Activated naive CD4-positive, alpha-beta T cell treated with anti-CD3 and anti-CD28 coated beads, Interleukin-2, amount 10 ng/mL, durations not matched to agents 7 days and 5 days (primary cell): ENCODE measurements at regions of chr16 and their contacts with region 1.

Region 1: DNA sequence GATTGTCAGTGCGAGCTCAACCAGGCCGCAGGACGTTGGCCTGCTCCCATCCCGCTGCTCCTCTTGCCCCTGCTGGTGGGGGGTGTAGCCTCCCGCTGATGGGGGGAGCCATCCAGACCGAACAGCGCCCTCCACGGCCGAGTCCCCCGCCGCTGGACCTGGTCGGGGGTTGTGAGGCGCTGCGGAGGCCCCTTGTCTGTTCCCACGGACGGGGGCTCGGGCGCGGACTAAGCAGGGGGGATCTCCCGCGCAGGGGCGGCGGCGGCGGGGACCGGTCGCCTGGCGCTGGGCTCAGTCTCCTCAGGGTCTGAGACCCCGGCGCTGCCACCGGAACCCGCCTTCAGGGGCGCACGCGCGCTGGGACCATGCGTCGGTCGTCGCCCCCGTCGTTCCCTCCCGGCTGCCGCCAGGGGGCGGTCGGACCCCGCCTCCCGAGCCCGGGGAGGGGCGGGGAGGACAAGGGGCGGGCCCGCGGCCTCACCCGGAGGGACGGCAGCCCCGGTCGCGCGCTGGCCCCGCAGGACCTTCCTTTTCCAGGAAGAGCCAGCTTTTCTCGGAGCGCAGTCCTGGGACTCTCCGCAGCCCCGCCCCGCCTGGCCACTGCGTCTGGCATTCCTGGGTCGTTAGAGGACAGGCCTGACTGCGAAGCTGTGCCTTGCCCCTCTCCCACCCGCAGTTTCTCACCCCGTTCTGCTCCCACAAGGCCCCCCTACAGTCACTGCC is 6.3 kb upstream of the IL32 start:
- DNase-seq: peak; percentile 89
- H3K4me3 Mint-ChIP-seq: peak overlapping the region; percentile 96
- H3K27ac Mint-ChIP-seq: peak overlapping the region; percentile 92
- H3K4me1 Mint-ChIP-seq: peaks cover 79% of the 10 kb centered on the region
- H3K27me3 Mint-ChIP-seq: no peaks in the 10 kb centered on the region

Region 2: GRCh38 chr16:3045357-3045728 is 13.8 kb before region 1 on chr16:
- CTCF ChIA-PET with region 1: interaction called, 11 read pairs
- DNase-seq: peak; percentile 72
- H3K4me3 Mint-ChIP-seq: peak overlapping the region; percentile 83
- H3K27ac Mint-ChIP-seq: peak overlapping the region; percentile 82
- H3K4me1 Mint-ChIP-seq: peaks cover 51% of the 10 kb centered on the region
- H3K27me3 Mint-ChIP-seq: peaks cover 85% of the 10 kb centered on the region

Region 3: DNA sequence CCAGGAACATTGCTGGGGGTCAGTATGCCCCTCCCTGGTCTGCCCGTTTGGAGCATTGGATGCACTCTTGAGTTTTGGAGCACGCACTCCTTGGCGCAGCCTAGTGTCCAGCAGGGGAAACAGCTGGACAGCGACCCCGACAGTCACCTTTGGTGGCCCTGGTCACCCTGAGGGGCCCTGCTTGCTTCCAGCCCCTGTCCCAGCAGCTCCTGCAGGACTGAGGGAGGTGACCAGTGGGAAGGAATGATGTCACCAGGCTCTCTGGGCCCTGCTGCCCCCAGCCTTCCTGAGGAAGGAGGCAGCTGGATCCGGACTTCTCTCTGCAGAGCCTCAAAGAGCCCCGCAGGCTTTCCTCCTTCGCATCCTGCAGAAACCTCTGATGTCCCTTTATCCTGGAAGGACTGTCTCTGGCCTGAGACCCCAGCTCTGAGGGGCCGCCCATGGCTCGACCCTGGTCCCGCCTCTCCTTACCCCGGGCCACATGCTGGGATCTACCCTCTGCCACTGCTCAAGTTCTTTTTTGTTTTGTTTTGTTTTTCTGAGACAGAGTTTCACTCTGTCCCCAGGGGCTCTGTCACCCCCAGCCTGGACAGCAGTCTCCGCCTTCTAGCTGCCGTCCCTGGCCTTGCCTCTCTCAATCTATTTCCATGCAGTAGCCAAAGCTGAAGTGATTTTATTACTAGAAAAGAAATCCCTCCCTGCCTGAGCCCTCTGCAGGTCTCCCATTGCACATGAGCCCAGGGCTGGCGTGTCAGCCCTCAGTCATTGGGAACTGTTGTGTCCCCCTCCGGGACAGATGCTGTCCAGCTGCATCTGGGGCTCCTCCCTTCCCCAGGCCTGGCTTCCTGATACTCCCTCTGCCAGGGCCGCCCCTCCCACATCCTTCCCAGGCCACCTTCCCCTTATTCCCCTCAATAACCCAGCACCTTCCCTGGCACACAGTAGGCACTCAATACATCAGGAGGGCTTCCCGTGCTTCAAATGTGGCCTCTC is 28.4 kb after region 1 on chr16:
- CTCF ChIA-PET with region 1: interaction called, 24 read pairs
- DNase-seq: no peak
- H3K4me3 Mint-ChIP-seq: no peak overlapping the region
- H3K27ac Mint-ChIP-seq: peak overlapping the region; percentile 77
- H3K4me1 Mint-ChIP-seq: peaks cover 64% of the 10 kb centered on the region
- H3K27me3 Mint-ChIP-seq: peaks cover 4% of the 10 kb centered on the region

Region 4: GRCh38 chr16:3099732-3100499 is 40.8 kb after region 1 on chr16:
- CTCF ChIA-PET with region 1: interaction called, 21 read pairs
- DNase-seq: peak; percentile 95
- H3K4me3 Mint-ChIP-seq: peak overlapping the region; percentile 73
- H3K27ac Mint-ChIP-seq: peak overlapping the region; percentile 78
- H3K4me1 Mint-ChIP-seq: peaks cover 79% of the 10 kb centered on the region
- H3K27me3 Mint-ChIP-seq: peaks cover 18% of the 10 kb centered on the region

Region 5: DNA sequence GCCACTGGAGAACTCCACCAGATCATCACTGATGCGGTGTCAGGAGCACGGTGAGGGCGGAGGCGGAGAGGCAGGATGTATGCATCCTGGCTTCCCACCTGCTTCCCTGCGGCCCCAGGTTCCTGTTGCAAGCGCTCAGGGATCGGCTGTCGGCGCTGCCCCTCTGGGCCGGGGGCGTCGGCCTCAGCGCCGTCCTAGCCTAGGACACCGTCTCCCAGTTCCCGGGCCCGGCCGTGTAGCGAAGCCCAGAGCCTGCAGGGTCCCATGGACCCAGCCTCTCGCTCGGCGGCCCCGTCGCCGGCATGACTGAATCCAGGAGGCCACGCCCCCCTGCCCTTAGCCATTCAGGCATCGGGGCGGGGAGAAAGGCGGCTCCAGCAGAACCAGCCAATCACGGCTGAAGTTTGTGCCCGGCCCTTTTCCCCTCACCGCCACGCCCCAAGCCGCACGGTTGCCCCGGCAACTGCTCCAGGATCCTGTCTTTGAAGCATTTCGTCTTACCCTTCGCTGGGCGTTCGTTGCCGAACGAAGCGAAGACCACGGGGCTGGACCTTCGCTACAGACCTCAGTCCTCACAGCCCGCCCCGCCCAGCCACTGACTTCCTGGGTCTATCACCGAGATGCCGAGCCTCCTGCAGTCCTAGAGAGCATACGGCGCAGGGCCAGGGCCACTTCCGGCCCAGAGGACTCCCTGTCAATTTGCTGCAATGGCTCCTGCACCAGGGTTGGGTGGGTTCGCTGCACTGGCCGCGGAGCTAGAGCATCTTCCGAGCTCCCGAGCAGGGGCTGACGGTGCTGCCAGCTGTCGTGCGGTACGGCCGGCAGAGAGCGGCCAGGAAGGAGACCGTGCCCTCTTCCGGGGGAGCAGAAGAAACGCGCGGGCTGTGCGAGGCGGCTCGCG is 65.1 kb after region 1 on chr16:
- CTCF ChIA-PET with region 1: interaction called, 131 read pairs
- DNase-seq: peak; percentile 99
- H3K4me3 Mint-ChIP-seq: peak overlapping the region; percentile 93
- H3K27ac Mint-ChIP-seq: peak overlapping the region; percentile 98
- H3K4me1 Mint-ChIP-seq: peaks cover 57% of the 10 kb centered on the region
- H3K27me3 Mint-ChIP-seq: peaks cover 8% of the 10 kb centered on the region